HepG2 (cell line): ENCODE measurements at regions of chr1 and their contacts with region 1.

Region 1: DNA sequence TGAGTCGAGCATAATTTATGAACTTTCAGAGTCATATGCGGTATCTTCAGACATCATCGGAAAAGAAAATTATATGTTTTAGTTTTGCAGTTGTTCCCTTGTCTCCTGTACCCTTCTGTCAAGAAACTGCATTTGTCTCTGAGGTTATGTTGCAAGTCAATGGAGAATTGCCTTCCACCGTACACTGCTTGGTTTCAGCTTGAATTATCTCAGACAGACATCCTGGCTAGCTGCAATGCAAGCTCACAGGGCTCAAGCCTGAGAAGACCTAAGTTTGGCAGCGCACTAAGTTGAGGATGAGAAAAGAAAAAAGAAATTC is 156.0 kb downstream of the NFIA start:
- DNase-seq: no peak
- ATAC-seq: no peak
- H3K4me3 ChIP-seq: no peak overlapping the region
- H3K27ac ChIP-seq: no peak overlapping the region
- H3K4me1 ChIP-seq: peaks cover 28% of the 10 kb centered on the region
- H3K27me3 ChIP-seq: no peaks in the 10 kb centered on the region
- CTCF ChIP-seq: no peak
- EP300 ChIP-seq: no peak
- POLR2A ChIP-seq: no peak
- RAD21 ChIP-seq: no peak

Region 2: DNA sequence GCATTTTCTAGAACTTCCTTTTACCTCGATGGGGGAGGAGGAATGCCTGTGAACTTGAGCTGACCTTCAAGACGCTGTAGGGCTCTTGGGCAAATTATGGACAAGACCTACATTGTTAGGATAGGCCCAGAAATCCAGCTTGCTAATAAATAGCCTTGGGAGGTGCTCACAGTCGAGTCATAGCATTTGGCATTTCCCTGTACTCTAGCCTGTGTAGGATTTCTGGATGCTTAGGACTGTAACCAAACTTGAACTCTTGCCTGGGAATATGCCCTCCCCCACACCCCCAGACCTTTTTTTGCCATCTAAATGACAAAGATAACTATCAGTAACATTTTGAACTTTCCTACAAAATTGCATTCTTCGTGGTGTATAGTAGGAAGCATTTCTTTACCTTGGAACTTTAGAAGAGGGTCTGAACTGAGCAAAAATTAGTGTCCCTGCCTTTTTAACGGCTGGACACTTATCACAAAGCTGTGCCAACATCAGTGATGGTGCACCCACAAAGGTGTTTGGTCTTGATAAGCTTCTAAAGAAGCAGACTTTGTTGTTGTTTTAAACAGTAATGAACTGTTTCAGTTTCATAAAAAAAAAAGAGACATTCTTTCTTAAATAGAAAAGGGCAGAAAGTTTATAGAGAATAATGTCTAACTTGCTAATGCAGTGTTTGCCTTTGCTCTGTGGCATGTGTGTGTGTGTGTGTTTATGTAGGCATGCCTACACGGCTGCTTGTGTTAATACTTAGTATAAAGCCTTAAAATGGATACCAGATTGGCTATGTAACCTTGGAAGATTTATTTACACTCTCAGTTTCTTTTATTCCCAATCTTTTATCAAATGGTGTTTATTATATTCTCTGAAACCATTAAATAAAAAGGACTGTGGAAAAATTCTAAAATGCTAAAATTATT is 67.7 kb before region 1 on chr1:
- CTCF ChIA-PET with region 1: no interaction called
- POLR2A ChIA-PET with region 1: no interaction called
- in situ Hi-C with region 1: no loop called
- intact Hi-C with region 1: no loop called
- DNase-seq: no peak
- ATAC-seq: peak; percentile 57
- H3K4me3 ChIP-seq: no peak overlapping the region
- H3K27ac ChIP-seq: no peak overlapping the region
- H3K4me1 ChIP-seq: peaks cover 48% of the 10 kb centered on the region
- H3K27me3 ChIP-seq: no peaks in the 10 kb centered on the region
- CTCF ChIP-seq: no peak
- EP300 ChIP-seq: no peak
- POLR2A ChIP-seq: no peak
- RAD21 ChIP-seq: no peak

Region 3: DNA sequence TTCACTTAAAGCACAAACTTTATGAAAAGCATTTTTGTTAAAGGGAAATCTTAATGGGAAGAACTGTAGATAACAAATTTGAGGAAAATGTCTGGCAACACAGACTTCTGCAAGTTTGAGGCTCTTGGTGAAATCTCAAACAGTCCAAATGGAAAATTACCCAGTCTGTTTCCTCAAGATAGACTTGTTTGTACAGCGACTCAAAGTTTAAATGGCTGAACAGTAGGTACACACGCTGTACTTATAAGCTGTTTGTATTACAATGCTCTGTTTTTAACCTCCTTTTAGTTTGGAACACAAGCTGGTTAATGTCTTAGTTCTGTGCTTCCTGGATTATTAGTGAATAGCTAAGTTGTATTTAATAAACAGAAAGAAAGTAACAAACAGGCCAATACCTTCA is 61.1 kb after region 1 on chr1:
- CTCF ChIA-PET with region 1: no interaction called
- POLR2A ChIA-PET with region 1: no interaction called
- in situ Hi-C with region 1: loop called (anchors 10 kb)
- intact Hi-C with region 1: no loop called
- DNase-seq: peak; percentile 60
- ATAC-seq: peak; percentile 75
- H3K4me3 ChIP-seq: peak overlapping the region in 1 of 3 experiments; percentile 22; a peak in 3 of 6 replicates
- H3K27ac ChIP-seq: peak overlapping the region; percentile 51
- H3K4me1 ChIP-seq: peaks cover 80% of the 10 kb centered on the region
- H3K27me3 ChIP-seq: no peaks in the 10 kb centered on the region
- CTCF ChIP-seq: no peak
- EP300 ChIP-seq: peak in 1 of 2 experiments; percentile 91; a peak in 2 of 4 replicates
- POLR2A ChIP-seq: no peak
- RAD21 ChIP-seq: no peak